GM23248 (cell line): ENCODE measurements at regions of chr17 and their contacts with region 1.

Region 1: DNA sequence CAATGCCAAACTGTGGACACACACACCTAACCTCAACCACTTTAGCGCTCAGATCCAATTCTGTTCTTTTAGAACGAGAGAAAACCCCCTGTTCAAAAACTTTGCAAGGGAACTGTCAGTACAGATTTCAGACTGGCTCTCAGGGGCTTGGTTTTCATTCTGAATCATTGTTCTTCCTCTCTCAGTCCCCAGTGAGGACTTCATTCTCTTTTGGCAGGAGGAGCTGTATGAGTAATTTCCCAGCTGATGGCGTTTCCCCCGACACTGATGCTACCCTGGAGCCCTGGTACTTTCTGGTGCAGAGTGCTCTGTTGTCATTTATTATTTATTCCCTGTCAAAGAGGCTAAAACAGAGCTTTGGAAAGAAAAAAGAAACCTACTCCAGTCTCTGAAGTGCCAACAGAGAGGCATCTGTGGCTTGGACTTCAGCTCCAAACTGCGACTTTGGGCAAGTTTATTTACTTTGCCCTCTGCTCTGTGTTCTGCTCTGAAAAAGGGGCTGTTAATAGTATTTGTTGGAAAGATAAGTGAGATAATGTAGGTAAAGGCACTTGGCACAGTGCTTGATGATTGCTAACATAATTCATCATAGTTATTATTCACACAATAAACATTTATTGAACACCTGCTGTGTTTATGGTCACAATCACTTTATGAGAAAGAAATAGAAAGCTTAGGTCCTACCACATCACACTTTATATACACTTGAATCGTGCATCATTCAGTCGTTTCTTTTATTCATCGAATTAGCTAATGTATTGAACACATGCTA is 28.3 kb downstream of the ETV4 start:
- DNase-seq: peak; percentile 85
- H3K4me3 ChIP-seq: no peak overlapping the region
- H3K27ac ChIP-seq: peak overlapping the region; percentile 63
- H3K4me1 ChIP-seq: peaks cover 14% of the 10 kb centered on the region
- H3K27me3 ChIP-seq: no peaks in the 10 kb centered on the region

Region 2: GRCh38 chr17:43456661-43457361 is 61.0 kb before region 1 on chr17:
- in situ Hi-C with region 1: no loop called
- DNase-seq: no peak
- H3K4me3 ChIP-seq: no peak overlapping the region
- H3K27ac ChIP-seq: no peak overlapping the region
- H3K4me1 ChIP-seq: peaks cover 14% of the 10 kb centered on the region
- H3K27me3 ChIP-seq: no peaks in the 10 kb centered on the region

Region 3: DNA sequence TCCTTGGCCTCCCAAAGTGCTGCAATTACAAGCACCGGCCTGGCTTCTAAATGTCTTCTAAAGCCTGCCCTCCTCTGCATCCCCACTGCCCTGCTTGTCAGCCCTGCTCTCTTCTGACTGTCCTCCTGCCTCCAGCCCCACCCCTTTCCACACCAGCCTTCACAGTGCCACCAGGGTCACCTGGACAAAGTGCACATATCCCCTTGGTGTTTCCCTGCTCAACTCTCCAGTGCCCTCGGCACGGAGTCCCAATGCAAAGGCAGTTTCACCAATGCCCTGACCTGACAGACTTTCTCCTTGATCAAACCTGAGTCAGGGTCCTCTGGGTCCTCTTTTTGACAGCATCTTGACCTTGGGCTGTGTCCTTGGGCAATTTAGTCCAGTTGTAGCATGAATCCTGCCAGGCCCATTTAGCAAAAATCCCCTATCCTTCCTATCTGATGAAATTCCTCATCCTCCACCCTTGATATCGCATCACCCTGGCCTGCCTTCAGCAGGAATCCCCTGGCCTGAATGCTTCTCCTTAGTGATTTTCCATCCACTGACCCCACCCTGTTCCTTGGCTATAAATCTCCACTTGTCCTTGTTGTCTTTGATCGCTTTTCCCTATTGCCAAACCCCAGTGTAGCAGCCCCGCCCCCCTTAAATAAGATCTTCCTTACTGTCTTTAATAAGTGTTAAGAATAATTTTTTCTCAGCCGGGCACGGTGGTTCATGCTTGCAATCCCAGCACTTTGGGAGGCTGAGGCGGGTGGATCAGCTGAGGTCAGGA is 71.0 kb after region 1 on chr17:
- in situ Hi-C with region 1: no loop called
- DNase-seq: no peak
- H3K4me3 ChIP-seq: no peak overlapping the region
- H3K27ac ChIP-seq: no peak overlapping the region
- H3K4me1 ChIP-seq: peaks cover 39% of the 10 kb centered on the region
- H3K27me3 ChIP-seq: no peaks in the 10 kb centered on the region

Region 4: DNA sequence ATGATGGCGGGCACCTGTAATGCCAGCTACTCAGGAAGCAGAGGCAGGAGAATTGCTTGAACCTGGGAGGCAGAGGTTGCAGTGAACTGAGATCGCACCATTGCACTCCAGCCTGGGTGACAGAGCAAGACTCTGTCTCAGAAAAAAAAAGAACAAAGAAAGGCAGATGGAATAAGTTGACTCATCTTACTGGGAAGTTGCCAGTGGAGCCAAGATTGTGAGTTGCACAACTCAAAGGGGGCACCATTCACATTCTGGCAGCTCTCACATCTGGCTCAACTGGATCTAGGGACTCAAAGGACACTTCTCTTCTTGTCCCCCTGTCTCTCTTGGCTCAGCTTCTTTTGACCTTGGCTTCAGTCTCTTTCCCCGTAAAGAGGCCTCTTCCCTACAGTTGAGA is 82.0 kb after region 1 on chr17:
- in situ Hi-C with region 1: no loop called
- DNase-seq: peak; percentile 93
- H3K4me3 ChIP-seq: no peak overlapping the region
- H3K27ac ChIP-seq: no peak overlapping the region
- H3K4me1 ChIP-seq: peaks cover 7% of the 10 kb centered on the region
- H3K27me3 ChIP-seq: no peaks in the 10 kb centered on the region

Region 5: GRCh38 chr17:43680461-43680860 is 162.7 kb after region 1 on chr17:
- in situ Hi-C with region 1: loop called (anchors 10 kb)
- DNase-seq: no peak
- H3K4me3 ChIP-seq: no peak overlapping the region
- H3K27ac ChIP-seq: no peak overlapping the region
- H3K4me1 ChIP-seq: no peaks in the 10 kb centered on the region
- H3K27me3 ChIP-seq: no peaks in the 10 kb centered on the region; the same call in 1 of the 2 replicates